Heart right ventricle (tissue), 16 donors: ENCODE measurements at regions of chr6 and their contacts with region 1.

Region 1: GRCh38 chr6:153575528-153575927 is 444.4 kb upstream of the RGS17 start:
- DNase-seq: no peak
- ATAC-seq: no peak
- H3K4me3 ChIP-seq: no peak overlapping the region
- H3K27ac ChIP-seq: no peak overlapping the region
- H3K4me1 ChIP-seq: no peaks in the 10 kb centered on the region
- H3K27me3 ChIP-seq: no peaks in the 10 kb centered on the region
- CTCF ChIP-seq: no peak

Region 2: GRCh38 chr6:153412519-153412918 is 163.0 kb before region 1 on chr6:
- intact Hi-C with region 1: loop called in 1 of 10 experiments (anchors 5 kb)
- DNase-seq: no peak
- ATAC-seq: no peak
- H3K4me3 ChIP-seq: no peak overlapping the region
- H3K27ac ChIP-seq: no peak overlapping the region
- H3K4me1 ChIP-seq: no peaks in the 10 kb centered on the region
- H3K27me3 ChIP-seq: no peaks in the 10 kb centered on the region
- CTCF ChIP-seq: no peak

Region 3: DNA sequence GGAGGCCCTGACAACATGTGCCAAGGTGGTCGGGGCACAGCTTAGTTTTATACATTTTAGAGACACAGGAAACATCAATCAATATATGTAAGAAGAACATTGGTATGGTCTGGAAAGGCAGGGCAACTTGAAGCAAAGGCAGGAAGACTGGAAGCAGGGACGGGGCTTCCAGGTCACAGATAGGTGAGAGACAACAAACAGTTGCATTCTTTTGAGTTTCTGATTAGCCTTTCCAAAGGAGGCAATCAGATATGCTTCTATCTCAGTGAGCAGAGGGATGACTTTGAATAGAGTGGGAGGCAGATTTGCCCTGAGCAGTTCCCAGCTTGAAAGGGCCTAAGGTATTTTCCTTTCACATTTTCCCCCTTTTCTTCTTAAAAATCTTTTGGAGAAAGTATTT is 133.4 kb before region 1 on chr6:
- intact Hi-C with region 1: no loop called
- DNase-seq: no peak
- ATAC-seq: no peak
- H3K4me3 ChIP-seq: no peak overlapping the region
- H3K27ac ChIP-seq: no peak overlapping the region
- H3K4me1 ChIP-seq: no peaks in the 10 kb centered on the region
- H3K27me3 ChIP-seq: no peaks in the 10 kb centered on the region
- CTCF ChIP-seq: no peak